ENCODE measurements at regions of chr2 and their contacts with region 1.

Region 1: DNA sequence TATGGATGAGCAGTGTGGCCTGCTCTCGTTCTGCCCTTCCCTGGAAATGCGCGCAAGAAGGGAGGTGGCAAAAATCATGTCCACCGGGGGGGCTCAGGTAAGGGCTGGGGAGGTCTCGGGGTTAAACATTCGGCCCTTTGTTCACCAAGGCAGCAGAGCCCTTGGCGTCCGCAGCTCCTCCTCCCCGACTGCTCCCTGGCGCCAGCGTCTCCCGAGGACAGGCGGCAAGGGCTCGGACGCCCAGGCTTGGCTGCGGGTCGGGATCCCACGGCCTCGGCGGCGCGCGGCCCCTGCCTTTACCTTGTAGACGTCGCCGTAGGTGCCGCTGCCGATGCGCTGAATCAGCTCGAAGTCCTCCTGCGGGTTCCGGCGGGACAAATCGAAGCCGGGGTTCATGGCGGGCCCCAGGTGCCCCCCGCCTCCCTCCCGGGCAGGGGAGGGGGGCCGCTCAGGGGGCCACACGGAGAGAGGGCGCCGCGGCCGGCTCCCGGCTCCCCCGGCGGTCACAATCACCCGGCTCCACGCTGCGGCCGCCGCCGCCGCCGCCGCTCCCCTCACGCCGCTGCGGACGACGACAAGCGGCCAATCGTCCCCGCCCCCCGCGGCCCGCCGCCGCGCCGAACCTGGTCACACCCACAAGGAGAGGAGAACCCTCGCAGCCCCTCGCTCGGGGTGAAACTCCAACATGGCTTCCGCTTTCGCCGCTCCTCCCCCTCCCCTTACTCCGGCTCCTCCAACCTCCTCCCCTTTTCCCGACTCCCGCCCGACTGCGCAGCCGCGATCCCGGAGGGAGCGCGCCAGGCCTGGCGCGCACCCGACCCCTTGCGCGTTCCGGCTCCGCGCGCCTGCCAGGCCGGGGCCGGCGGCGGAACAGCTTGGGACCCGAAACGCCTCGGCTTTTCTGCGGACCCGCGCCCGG is at the start of gene MAP4K3:
- DNase-seq: peak; percentile 74
- ATAC-seq: peak; percentile 82
- H3K4me3 Mint-ChIP-seq: peak within 1 kb of the TSS; percentile 89
- H3K27ac Mint-ChIP-seq: peak within 1 kb of the TSS; percentile 74
- H3K4me1 Mint-ChIP-seq: peaks cover 20% of the 10 kb centered on the region
- H3K27me3 Mint-ChIP-seq: no peaks in the 10 kb centered on the region
- CTCF ChIP-seq: no peak
- total RNA-seq, gene MAP4K3: 9.9 and 11.0 TPM in 2 replicates

Region 2: GRCh38 chr2:39059366-39059952 is 377.4 kb before region 1 on chr2:
- CTCF ChIA-PET with region 1: no interaction called
- POLR2A ChIA-PET with region 1: no interaction called
- intact Hi-C with region 1: no loop called
- DNase-seq: no peak
- ATAC-seq: no peak
- H3K4me3 Mint-ChIP-seq: no peak overlapping the region
- H3K27ac Mint-ChIP-seq: no peak overlapping the region
- H3K4me1 Mint-ChIP-seq: no peaks in the 10 kb centered on the region
- H3K27me3 Mint-ChIP-seq: no peaks in the 10 kb centered on the region
- CTCF ChIP-seq: peak; percentile 67

Region 3: DNA sequence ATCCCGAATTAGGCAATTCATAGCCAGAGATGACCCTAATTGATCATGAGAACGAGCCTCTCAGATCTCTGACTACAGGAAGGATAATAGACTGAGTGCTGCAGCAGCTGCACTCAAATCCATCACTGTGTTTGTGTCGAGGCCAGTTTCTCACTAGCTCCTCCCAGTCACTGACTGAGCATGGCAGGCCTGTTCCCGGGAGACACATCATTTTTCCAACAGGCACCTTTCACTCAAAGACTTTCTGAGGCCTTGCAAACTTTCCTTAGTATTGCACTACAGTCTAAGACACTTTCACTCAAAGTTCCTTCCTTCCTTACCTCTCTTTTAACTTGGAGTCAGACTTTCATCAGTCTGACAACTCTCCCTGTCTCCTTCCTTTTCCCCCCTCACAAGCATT is 329.7 kb before region 1 on chr2:
- CTCF ChIA-PET with region 1: no interaction called
- POLR2A ChIA-PET with region 1: no interaction called
- intact Hi-C with region 1: no loop called
- DNase-seq: no peak
- ATAC-seq: no peak
- H3K4me3 Mint-ChIP-seq: no peak overlapping the region
- H3K27ac Mint-ChIP-seq: peak overlapping the region; percentile 37
- H3K4me1 Mint-ChIP-seq: peaks cover 63% of the 10 kb centered on the region
- H3K27me3 Mint-ChIP-seq: no peaks in the 10 kb centered on the region
- CTCF ChIP-seq: no peak

Region 4: DNA sequence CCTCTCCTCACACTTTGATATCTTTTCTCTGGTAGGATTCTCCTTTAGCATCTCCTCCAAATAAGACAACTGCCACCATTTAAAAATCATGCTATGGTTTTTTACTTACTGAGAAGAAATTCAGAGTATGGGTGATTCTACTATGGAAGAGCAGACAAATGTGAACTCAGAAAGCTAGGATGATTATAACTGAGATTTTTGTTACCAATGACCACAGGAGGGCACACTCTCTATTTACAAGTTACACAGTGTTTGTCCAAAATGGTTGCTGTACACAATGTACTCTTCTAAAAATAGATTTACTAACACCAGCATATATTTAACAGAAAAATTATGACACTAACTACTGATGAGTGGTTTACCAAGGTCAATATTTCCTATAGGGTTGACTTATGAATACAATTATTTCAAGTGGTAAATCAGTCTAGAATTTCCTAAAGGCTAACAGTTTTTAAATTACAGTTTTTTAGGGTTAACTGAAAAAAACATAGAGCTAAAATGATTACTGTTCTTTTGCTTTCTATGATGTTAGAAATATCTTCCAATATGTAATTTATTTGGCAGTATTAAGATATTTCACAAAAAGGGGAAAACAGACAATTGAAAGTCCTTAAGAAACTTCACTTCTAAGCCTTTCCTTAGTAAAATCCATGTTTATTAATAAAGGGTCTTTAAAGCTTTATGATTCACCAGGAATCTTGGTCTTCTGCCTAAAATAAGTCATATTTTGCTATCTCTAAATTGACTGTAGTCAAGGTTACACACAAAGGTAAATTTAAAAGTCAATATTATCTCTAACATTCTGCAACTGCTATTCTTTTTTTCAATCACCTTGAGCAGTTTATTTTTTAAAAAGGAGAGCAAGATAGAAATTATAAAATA is 57.0 kb before region 1 on chr2:
- CTCF ChIA-PET with region 1: interaction called, 11 read pairs
- POLR2A ChIA-PET with region 1: interaction called, 7 read pairs
- intact Hi-C with region 1: loop called (anchors 2 kb)
- DNase-seq: no peak
- ATAC-seq: peak; percentile 35
- H3K4me3 Mint-ChIP-seq: no peak overlapping the region
- H3K27ac Mint-ChIP-seq: no peak overlapping the region
- H3K4me1 Mint-ChIP-seq: peaks cover 30% of the 10 kb centered on the region
- H3K27me3 Mint-ChIP-seq: no peaks in the 10 kb centered on the region
- CTCF ChIP-seq: no peak

Region 5: GRCh38 chr2:39419282-39420223 is 17.3 kb before region 1 on chr2:
- CTCF ChIA-PET with region 1: no interaction called
- POLR2A ChIA-PET with region 1: interaction called, 3 read pairs
- intact Hi-C with region 1: loop called (anchors 2 kb)
- DNase-seq: no peak
- ATAC-seq: no peak
- H3K4me3 Mint-ChIP-seq: no peak overlapping the region
- H3K27ac Mint-ChIP-seq: no peak overlapping the region
- H3K4me1 Mint-ChIP-seq: peaks cover 4% of the 10 kb centered on the region
- H3K27me3 Mint-ChIP-seq: no peaks in the 10 kb centered on the region
- CTCF ChIP-seq: no peak

Region 6: GRCh38 chr2:39476524-39476923 is 39.7 kb after region 1 on chr2:
- CTCF ChIA-PET with region 1: no interaction called
- POLR2A ChIA-PET with region 1: interaction called, 9 read pairs
- intact Hi-C with region 1: loop called (anchors 2 kb)
- DNase-seq: no peak
- ATAC-seq: peak; percentile 94
- H3K4me3 Mint-ChIP-seq: peak overlapping the region; percentile 62
- H3K27ac Mint-ChIP-seq: peak overlapping the region; percentile 75
- H3K4me1 Mint-ChIP-seq: peaks cover 28% of the 10 kb centered on the region
- H3K27me3 Mint-ChIP-seq: no peaks in the 10 kb centered on the region
- CTCF ChIP-seq: no peak

Region 7: GRCh38 chr2:39492095-39492590 is 55.3 kb after region 1 on chr2:
- CTCF ChIA-PET with region 1: no interaction called
- POLR2A ChIA-PET with region 1: interaction called, 6 read pairs
- intact Hi-C with region 1: loop called (anchors 1 kb)
- DNase-seq: no peak
- ATAC-seq: peak; percentile 92
- H3K4me3 Mint-ChIP-seq: peak overlapping the region; percentile 66
- H3K27ac Mint-ChIP-seq: peak overlapping the region; percentile 87
- H3K4me1 Mint-ChIP-seq: peaks cover 57% of the 10 kb centered on the region
- H3K27me3 Mint-ChIP-seq: peaks cover 10% of the 10 kb centered on the region
- CTCF ChIP-seq: no peak

Region 8: DNA sequence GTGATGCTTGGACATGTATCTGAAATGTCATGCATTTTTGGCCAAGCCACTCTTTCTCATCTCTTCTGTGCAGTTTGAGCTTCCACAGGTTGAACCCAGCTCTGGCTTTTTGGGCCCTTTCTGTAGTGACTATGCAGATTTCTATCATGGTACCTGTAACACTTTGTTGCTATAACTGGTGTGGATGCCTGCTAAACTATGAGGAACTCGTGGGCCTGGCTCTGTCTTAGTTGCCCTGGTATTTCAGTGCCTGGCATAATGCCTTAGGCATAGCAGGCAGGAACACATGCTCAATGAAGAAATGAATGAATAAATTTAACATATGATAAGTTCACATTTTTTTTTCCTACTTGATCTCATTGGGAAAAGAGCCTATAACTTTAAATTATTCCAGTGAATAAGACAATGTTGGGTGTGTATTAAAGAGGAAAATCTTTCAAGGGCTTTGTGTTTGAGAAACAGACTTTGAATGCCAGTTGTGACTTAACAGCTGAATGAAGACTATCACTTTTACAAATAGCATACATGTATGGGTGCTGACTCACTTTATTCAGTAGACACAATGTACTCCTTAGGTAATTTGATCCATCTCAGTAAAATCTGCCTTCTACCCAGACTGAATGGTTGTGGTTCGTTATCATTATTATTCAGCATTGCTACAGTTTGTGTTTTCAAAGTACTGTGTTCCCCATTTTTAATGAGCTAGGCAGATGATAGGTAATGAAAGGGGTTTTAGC is 86.6 kb after region 1 on chr2:
- CTCF ChIA-PET with region 1: no interaction called
- POLR2A ChIA-PET with region 1: no interaction called
- intact Hi-C with region 1: loop called (anchors 2 kb)
- DNase-seq: no peak
- ATAC-seq: no peak
- H3K4me3 Mint-ChIP-seq: no peak overlapping the region
- H3K27ac Mint-ChIP-seq: no peak overlapping the region
- H3K4me1 Mint-ChIP-seq: peaks cover 40% of the 10 kb centered on the region
- H3K27me3 Mint-ChIP-seq: no peaks in the 10 kb centered on the region
- CTCF ChIP-seq: no peak

Region 9: GRCh38 chr2:39778962-39779851 is 342.4 kb after region 1 on chr2 and contains the start of gene THUMPD2:
- CTCF ChIA-PET with region 1: no interaction called
- POLR2A ChIA-PET with region 1: no interaction called
- intact Hi-C with region 1: loop called (anchors 2 kb)
- DNase-seq: peak; percentile 64
- ATAC-seq: peak; percentile 82
- H3K4me3 Mint-ChIP-seq: peak within 1 kb of the TSS; percentile 89
- H3K27ac Mint-ChIP-seq: peak within 1 kb of the TSS; percentile 82
- H3K4me1 Mint-ChIP-seq: peaks cover 60% of the 10 kb centered on the region
- H3K27me3 Mint-ChIP-seq: no peaks in the 10 kb centered on the region
- CTCF ChIP-seq: no peak
- total RNA-seq, gene THUMPD2: 13.2 and 14.1 TPM in 2 replicates

Region 10: DNA sequence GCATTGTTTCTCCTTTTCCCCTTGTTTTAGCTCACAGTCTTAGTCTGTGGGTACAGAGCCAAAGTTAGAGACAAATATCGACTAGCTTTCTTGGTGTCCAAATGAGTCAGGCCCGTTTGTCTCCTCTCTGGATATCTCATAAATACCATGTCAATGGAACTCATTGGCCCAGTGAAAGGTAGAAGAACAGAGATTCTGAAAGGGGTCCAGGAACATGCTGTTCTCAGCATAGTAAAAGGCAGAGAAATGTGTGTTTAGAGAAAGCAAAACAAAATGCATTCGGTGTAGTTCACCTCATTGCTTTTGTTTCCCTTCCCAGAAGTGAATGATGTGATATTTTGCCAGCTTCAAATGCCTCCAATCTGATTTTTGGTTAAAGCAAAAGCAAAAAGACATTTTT is 1253.7 kb after region 1 on chr2:
- CTCF ChIA-PET with region 1: no interaction called
- POLR2A ChIA-PET with region 1: no interaction called
- intact Hi-C with region 1: no loop called
- DNase-seq: no peak
- ATAC-seq: no peak
- H3K4me3 Mint-ChIP-seq: no peak overlapping the region
- H3K27ac Mint-ChIP-seq: no peak overlapping the region
- H3K4me1 Mint-ChIP-seq: no peaks in the 10 kb centered on the region
- H3K27me3 Mint-ChIP-seq: no peaks in the 10 kb centered on the region
- CTCF ChIP-seq: no peak